MCF 10A (cell line): ENCODE measurements at regions of chr4 and their contacts with region 1.

Region 1: GRCh38 chr4:55175779-55176231 is 50.4 kb upstream of the KDR start:
- DNase-seq: peak; percentile 47
- H3K4me3 Mint-ChIP-seq: no peak overlapping the region
- H3K27ac Mint-ChIP-seq: peak overlapping the region; percentile 63
- H3K4me1 Mint-ChIP-seq: peaks cover 30% of the 10 kb centered on the region
- H3K27me3 Mint-ChIP-seq: no peaks in the 10 kb centered on the region
- CTCF ChIP-seq: no peak

Region 2: DNA sequence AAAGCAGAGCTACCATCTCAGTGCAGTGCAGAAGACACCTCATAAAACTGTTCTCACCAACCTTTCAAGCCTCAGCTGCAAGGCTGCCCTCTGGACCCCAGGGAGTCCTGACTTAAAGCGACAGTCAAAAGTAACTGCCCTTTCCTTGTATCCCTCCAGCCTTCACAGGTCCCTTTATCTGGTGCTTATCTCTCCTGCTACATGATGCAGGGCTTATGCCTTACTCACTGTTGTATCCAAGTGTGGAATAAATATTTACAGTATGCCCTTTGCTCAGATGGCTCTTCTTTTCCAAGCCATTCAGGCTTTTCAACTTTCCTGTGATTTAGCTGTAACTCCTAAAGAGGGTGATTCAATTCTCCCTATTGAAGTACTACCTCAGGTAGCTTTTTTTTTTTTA is 143.0 kb before region 1 on chr4:
- CTCF ChIA-PET with region 1: interaction called, 3 read pairs
- POLR2A ChIA-PET with region 1: interaction called, 8 read pairs
- intact Hi-C with region 1: loop called (anchors 5 kb)
- DNase-seq: no peak
- H3K4me3 Mint-ChIP-seq: no peak overlapping the region
- H3K27ac Mint-ChIP-seq: peak overlapping the region; percentile 49
- H3K4me1 Mint-ChIP-seq: peaks cover 71% of the 10 kb centered on the region
- H3K27me3 Mint-ChIP-seq: no peaks in the 10 kb centered on the region
- CTCF ChIP-seq: no peak

Region 3: DNA sequence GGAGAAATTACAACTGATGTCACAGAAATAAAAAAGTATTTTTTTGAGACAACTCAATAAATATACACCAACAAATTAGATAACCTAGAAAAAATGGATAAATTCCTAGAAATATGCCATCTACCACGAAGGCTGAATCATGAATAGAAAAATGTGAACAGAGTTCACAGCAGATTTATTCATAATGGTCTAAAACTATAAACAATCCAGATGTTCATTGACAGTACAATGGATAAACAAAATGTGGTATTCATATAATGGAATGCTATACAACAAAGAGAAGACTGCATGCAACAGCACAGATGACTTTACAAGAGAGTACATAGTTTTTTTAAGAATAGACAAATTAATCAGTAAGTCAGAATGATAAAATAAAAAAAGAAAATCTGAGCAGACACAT is 315.7 kb after region 1 on chr4:
- CTCF ChIA-PET with region 1: no interaction called
- POLR2A ChIA-PET with region 1: no interaction called
- intact Hi-C with region 1: no loop called
- DNase-seq: no peak
- H3K4me3 Mint-ChIP-seq: no peak overlapping the region
- H3K27ac Mint-ChIP-seq: peak overlapping the region; percentile 30
- H3K4me1 Mint-ChIP-seq: no peaks in the 10 kb centered on the region
- H3K27me3 Mint-ChIP-seq: no peaks in the 10 kb centered on the region
- CTCF ChIP-seq: no peak

Region 4: GRCh38 chr4:55896622-55897021 is 720.8 kb after region 1 on chr4:
- CTCF ChIA-PET with region 1: no interaction called
- POLR2A ChIA-PET with region 1: no interaction called
- intact Hi-C with region 1: no loop called
- DNase-seq: no peak
- H3K4me3 Mint-ChIP-seq: no peak overlapping the region
- H3K27ac Mint-ChIP-seq: no peak overlapping the region
- H3K4me1 Mint-ChIP-seq: no peaks in the 10 kb centered on the region
- H3K27me3 Mint-ChIP-seq: no peaks in the 10 kb centered on the region
- CTCF ChIP-seq: no peak